HepG2 (cell line): ENCODE measurements at regions of chr10 and their contacts with region 1.

Region 1: GRCh38 chr10:45470098-45471012 is 96.3 kb downstream of the ALOX5 start:
- DNase-seq: peak; percentile 88
- ATAC-seq: peak; percentile 92
- H3K4me3 ChIP-seq: peak overlapping the region in 2 of 3 experiments; percentile 31 to 34; a peak in 3 of 6 replicates
- H3K27ac ChIP-seq: peak overlapping the region; percentile 63
- H3K4me1 ChIP-seq: peaks cover 29% of the 10 kb centered on the region
- H3K27me3 ChIP-seq: no peaks in the 10 kb centered on the region
- CTCF ChIP-seq: no peak
- EP300 ChIP-seq: peak in 1 of 2 experiments; percentile 73; a peak in 1 of 4 replicates
- POLR2A ChIP-seq: no peak
- RAD21 ChIP-seq: no peak

Region 2: DNA sequence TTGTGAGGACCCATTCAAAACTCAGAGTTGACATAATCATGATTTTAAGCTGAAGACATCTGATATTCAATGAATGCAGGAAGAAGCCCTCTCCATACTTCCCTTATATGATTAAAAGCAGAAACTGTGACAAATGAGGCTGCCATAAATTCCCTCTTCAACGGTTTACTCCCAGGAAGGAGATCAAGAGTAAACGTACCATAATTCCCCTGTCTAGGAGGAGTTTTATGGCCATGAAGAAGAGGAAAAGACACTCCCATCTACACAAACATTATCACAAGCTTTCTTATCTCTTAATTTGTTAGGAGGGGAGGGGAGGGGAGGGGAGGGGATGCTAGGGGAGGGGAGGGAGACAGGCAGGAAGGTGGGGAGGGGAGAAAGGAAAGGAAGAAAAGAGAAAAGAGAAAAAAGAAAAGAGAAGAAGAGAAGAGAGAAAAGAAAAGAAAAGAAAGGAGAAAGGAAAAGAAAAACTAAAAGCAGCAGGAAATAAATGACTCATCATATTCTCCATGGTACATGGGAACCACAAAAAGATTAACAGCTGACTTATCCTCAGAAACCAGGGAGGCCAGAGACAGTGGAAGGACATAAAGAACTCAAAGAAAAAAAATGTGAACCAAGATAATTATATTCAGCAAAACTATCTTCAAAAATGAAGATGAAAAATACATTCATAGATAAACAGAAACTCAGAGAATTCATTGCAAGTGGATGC is 25.2 kb after region 1 on chr10:
- CTCF ChIA-PET with region 1: no interaction called
- POLR2A ChIA-PET with region 1: no interaction called
- in situ Hi-C with region 1: no loop called
- intact Hi-C with region 1: loop called (anchors 2 kb)
- DNase-seq: no peak
- ATAC-seq: no peak
- H3K4me3 ChIP-seq: no peak overlapping the region
- H3K27ac ChIP-seq: no peak overlapping the region
- H3K4me1 ChIP-seq: no peaks in the 10 kb centered on the region
- H3K27me3 ChIP-seq: no peaks in the 10 kb centered on the region; a peak in 1 of 5 replicates
- CTCF ChIP-seq: no peak
- EP300 ChIP-seq: no peak
- POLR2A ChIP-seq: no peak
- RAD21 ChIP-seq: no peak

Region 3: DNA sequence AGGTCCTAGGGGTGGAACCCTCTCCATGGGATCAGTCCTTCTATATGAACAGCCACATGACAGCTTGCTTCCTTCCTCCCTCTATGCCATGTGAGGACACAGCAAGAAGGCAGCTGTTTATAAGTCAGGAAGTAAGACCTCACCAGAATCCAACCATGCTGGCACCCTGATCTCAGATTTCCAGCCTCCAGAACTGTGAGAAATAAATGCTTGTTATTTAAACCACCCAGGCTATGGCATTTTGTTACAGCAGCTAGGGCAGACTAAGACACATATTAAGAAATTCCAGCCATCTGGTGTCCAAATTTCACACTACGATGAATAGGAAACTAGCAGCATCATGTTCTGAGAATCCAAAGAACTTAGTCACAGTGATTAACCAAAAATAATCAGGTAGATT is 62.1 kb after region 1 on chr10:
- CTCF ChIA-PET with region 1: no interaction called
- POLR2A ChIA-PET with region 1: no interaction called
- in situ Hi-C with region 1: no loop called
- intact Hi-C with region 1: loop called (anchors 5 kb)
- DNase-seq: no peak
- ATAC-seq: no peak
- H3K4me3 ChIP-seq: no peak overlapping the region
- H3K27ac ChIP-seq: no peak overlapping the region
- H3K4me1 ChIP-seq: no peaks in the 10 kb centered on the region
- H3K27me3 ChIP-seq: no peaks in the 10 kb centered on the region
- CTCF ChIP-seq: no peak
- EP300 ChIP-seq: no peak
- POLR2A ChIP-seq: no peak
- RAD21 ChIP-seq: no peak

Region 4: DNA sequence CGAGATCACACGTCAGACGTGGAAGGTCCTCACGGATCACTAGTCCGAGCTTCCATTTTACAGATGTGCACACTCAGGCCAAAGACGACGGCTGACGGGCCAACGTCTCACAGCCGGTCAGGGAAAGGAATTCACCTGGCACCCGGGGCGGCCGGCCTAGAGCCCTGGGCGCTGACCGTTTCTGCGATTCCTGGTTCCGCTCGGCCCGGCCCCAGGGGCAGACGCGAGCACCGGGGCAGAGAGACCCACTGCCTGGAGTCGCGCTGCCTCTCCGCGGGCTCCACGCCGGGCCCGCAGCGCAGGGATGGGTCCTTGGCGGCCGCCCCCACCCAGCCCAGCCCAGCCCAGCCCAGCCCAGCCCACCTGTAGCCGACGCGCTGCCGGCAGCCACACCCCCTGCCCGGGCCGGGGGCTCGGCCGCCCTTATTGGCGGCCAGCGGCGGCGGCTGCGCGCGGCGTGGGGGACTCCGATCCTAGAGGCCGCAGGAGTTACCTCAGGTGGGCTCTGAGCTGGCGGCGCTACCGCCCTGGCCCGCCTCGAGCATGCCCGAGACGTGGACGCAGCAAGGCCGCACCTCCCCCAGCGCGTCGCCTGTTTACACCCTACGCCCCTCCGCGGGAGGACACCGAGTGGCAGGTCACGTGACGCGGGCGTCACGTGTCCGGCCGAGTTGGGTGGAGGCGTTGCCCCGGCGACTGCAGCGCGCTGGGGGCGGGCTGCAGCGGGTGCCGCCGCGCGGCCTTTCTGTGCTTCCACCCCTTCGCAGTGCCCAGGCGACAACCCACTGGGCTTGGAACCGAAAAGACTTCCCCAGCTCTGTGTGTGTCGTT is 124.1 kb after region 1 on chr10:
- CTCF ChIA-PET with region 1: no interaction called
- POLR2A ChIA-PET with region 1: no interaction called
- in situ Hi-C with region 1: no loop called
- intact Hi-C with region 1: loop called (anchors 2 kb)
- DNase-seq: peak; percentile 90
- ATAC-seq: peak; percentile 92
- H3K4me3 ChIP-seq: peak overlapping the region; percentile 81 to 92 (median 88)
- H3K27ac ChIP-seq: peak overlapping the region; percentile 77
- H3K4me1 ChIP-seq: peaks cover 64% of the 10 kb centered on the region
- H3K27me3 ChIP-seq: no peaks in the 10 kb centered on the region; a peak in 1 of 5 replicates
- CTCF ChIP-seq: peak; percentile 55
- EP300 ChIP-seq: peak in 1 of 2 experiments; percentile 72; a peak in 2 of 4 replicates
- POLR2A ChIP-seq: peak; percentile 58 to 76
- RAD21 ChIP-seq: peak; percentile 75